Mucosa of descending colon (tissue), 3 donors: ENCODE measurements at regions of chr15 and their contacts with region 1.

Region 1: DNA sequence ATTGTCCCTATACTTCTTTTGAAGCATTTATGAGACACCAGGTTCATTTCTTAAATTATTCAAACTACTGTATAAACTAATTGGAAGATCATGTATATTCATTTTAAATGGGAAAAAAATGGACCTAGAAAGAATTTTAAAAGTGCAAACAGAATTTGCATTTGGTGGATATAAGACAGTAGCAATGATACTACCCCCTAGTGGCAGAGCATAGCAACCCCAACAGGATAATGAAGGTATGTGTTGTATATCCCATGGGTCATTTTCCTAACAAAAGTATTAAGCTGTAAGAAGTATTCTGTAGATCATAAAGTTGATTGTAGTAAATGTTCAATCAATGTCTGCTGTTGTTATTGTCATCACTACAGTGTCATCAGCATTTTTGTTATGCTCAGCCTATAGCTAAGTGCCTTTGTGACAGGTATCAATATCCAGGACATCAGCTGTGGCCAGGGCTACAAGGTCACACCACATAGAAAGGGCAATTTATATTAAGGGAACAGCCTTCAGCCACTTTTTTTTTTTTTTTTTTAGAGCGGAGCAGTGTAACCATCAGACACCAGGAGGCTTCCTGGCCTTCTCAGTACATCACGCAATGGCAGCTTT is 175.8 kb downstream of the FOXB1 start:
- DNase-seq: peak in 1 of 3 donors; percentile 66
- ATAC-seq: peak; percentile 68
- H3K4me3 ChIP-seq: no peak overlapping the region
- H3K4me1 ChIP-seq: no peaks in the 10 kb centered on the region
- CTCF ChIP-seq: peak; percentile 51

Region 2: DNA sequence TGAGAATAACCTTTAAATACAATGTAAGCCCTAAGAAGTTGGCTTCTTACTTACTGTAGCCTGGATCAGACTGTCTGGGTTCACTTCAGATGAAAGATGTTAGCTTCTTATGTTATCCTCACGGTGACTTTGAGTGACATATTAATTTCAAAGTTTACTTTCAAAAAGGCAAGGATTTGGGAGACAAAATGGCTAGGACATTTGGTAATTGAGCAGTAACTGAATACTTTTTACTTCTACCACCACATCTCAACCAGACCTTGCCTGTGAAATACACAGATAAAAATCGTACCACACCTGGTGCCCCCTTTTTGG is 454.8 kb before region 1 on chr15:
- intact Hi-C with region 1: loop called in 1 of 2 experiments (anchors 10 kb)
- DNase-seq: no peak
- ATAC-seq: no peak
- H3K4me3 ChIP-seq: no peak overlapping the region
- H3K4me1 ChIP-seq: no peaks in the 10 kb centered on the region
- CTCF ChIP-seq: no peak